ENCODE measurements at regions of chr7 and their contacts with region 1.

Region 1: DNA sequence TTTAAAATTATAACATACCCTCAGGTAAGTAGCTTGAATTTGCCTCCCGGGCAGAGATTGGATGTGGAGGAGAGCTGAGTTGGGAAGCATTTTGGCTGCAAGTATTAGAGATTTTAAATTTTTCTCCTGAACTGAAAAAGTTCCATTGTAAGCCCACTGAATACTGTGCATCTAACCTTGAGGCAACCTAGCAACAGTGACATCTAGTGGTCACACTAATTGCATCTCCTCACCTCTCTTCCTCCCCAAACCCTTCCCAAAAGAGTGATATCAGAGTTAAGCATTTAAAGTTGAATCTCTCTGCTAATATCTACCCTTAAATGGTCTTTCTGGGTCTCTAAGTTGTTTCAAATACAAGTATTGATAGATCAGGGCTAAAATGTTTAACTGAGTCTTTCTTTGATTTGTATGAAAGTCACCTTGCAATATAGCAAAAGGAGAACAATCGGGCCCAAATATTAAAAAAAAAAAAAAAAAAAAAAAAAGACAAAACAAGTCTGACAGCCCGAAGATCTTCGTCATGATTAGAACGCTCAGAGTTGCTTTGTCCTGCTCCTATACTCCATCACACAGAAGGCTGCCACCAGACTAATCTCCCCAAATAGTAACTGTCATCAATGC is 40.4 kb upstream of the DLX5 start:
- DNase-seq: peak in 8 of 35 experiments; percentile 0 to 69 (median 6)
- ATAC-seq: peak in 2 of 4 experiments; percentile 46 to 48
- H3K4me3 ChIP-seq: no peak overlapping the region
- H3K4me3 Mint-ChIP-seq: no peak overlapping the region
- H3K27ac ChIP-seq: no peak overlapping the region
- H3K27ac Mint-ChIP-seq: no peak overlapping the region
- H3K4me1 ChIP-seq: no peaks in the 10 kb centered on the region
- H3K4me1 Mint-ChIP-seq: no peaks in the 10 kb centered on the region
- H3K27me3 ChIP-seq: no peaks in the 10 kb centered on the region
- H3K27me3 Mint-ChIP-seq: peaks cover 4 to 11% of the 10 kb centered on the region in 2 donors

Region 2: GRCh38 chr7:95960706-95961244 is 1104.3 kb before region 1 on chr7:
- CTCF ChIA-PET with region 1: interaction called in 1 of 2 experiments, 13 read pairs
- POLR2A ChIA-PET with region 1: no interaction called
- DNase-seq: no peak
- ATAC-seq: no peak
- H3K4me3 ChIP-seq: no peak overlapping the region
- H3K4me3 Mint-ChIP-seq: no peak overlapping the region
- H3K27ac ChIP-seq: no peak overlapping the region
- H3K27ac Mint-ChIP-seq: no peak overlapping the region
- H3K4me1 ChIP-seq: no peaks in the 10 kb centered on the region
- H3K4me1 Mint-ChIP-seq: no peaks in the 10 kb centered on the region
- H3K27me3 ChIP-seq: no peaks in the 10 kb centered on the region
- H3K27me3 Mint-ChIP-seq: peaks cover 3 to 19% of the 10 kb centered on the region in 2 donors

Measured in T-cell (primary cell).